ENCODE measurements at regions of chr14 and their contacts with region 1.

Region 1: GRCh38 chr14:58637391-58638230 is at the start of gene DACT1:
- DNase-seq: peak; percentile 39
- ATAC-seq: peak; percentile 49
- H3K4me3 ChIP-seq: peak within 1 kb of the TSS; percentile 63
- H3K27ac ChIP-seq: no peak within 1 kb of the TSS
- H3K4me1 ChIP-seq: peaks cover 16% of the 10 kb centered on the region
- H3K27me3 ChIP-seq: peaks cover 62% of the 10 kb centered on the region
- CTCF ChIP-seq: no peak
- total RNA-seq, gene DACT1: 0.40 and 1.8 TPM in 2 replicates

Region 2: GRCh38 chr14:58501214-58501816 is 136.3 kb before region 1 on chr14:
- CTCF ChIA-PET with region 1: interaction called, 46 read pairs
- POLR2A ChIA-PET with region 1: no interaction called
- intact Hi-C with region 1: loop called (anchors 1 kb)
- DNase-seq: peak; percentile 97
- ATAC-seq: peak; percentile 99
- H3K4me3 ChIP-seq: no peak overlapping the region
- H3K27ac ChIP-seq: no peak overlapping the region
- H3K4me1 ChIP-seq: no peaks in the 10 kb centered on the region
- H3K27me3 ChIP-seq: no peaks in the 10 kb centered on the region
- CTCF ChIP-seq: peak; percentile 100

Region 3: GRCh38 chr14:58796242-58797009 is 158.8 kb after region 1 on chr14:
- CTCF ChIA-PET with region 1: no interaction called
- POLR2A ChIA-PET with region 1: no interaction called
- intact Hi-C with region 1: loop called (anchors 1 kb)
- DNase-seq: no peak
- ATAC-seq: no peak
- H3K4me3 ChIP-seq: no peak overlapping the region
- H3K27ac ChIP-seq: no peak overlapping the region
- H3K4me1 ChIP-seq: no peaks in the 10 kb centered on the region
- H3K27me3 ChIP-seq: peaks cover 85% of the 10 kb centered on the region
- CTCF ChIP-seq: no peak

Region 4: GRCh38 chr14:58826845-58827686 is 189.5 kb after region 1 on chr14:
- CTCF ChIA-PET with region 1: interaction called, 7 read pairs
- POLR2A ChIA-PET with region 1: no interaction called
- intact Hi-C with region 1: loop called (anchors 1 kb)
- DNase-seq: peak; percentile 61
- ATAC-seq: peak; percentile 62
- H3K4me3 ChIP-seq: no peak overlapping the region
- H3K27ac ChIP-seq: no peak overlapping the region
- H3K4me1 ChIP-seq: peaks cover 18% of the 10 kb centered on the region
- H3K27me3 ChIP-seq: peaks cover 42% of the 10 kb centered on the region
- CTCF ChIP-seq: peak; percentile 85

Region 5: DNA sequence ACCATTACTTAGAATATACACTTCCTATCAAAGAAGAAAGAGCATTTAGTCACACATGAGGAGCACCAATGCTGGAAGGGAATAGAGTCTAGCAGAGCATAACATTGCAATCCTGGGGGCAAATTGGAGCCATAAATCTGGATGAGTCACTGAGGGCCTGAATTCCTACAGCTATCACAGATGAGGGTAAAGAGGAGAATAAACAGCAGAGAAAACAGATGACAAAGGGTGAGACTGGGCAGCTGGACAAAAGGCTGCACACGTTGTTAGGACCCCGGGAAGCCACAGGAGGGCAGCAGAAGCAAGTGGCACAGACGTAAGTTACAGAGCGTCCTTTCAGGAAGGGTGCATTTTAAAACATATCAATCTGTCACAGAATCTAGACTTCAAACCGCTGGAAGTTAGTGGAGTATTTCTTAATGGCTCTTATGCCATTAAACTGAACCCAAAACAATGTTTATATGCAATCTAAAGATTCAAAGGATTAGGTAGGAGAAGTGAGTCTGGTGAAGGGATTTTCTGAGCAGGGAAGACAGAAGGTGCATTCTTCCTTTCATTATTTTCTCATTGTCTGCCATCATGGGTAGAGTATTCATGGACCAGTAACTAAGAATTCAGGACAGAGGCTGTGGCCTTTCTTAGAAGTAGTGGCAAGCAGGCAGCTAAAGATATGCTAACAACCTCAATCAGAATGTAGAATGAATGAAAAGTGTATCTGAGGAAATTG is 391.0 kb after region 1 on chr14:
- CTCF ChIA-PET with region 1: interaction called, 4 read pairs
- POLR2A ChIA-PET with region 1: no interaction called
- intact Hi-C with region 1: loop called (anchors 1 kb)
- DNase-seq: peak; percentile 100
- ATAC-seq: peak; percentile 98
- H3K4me3 ChIP-seq: peak overlapping the region; percentile 8; the same call in 1 of the 2 replicates
- H3K27ac ChIP-seq: no peak overlapping the region
- H3K4me1 ChIP-seq: peaks cover 16% of the 10 kb centered on the region
- H3K27me3 ChIP-seq: peaks cover 27% of the 10 kb centered on the region
- CTCF ChIP-seq: peak; percentile 100

Region 6: GRCh38 chr14:59301354-59301753 is 663.7 kb after region 1 on chr14:
- CTCF ChIA-PET with region 1: no interaction called
- POLR2A ChIA-PET with region 1: no interaction called
- intact Hi-C with region 1: no loop called
- DNase-seq: no peak
- ATAC-seq: no peak
- H3K4me3 ChIP-seq: no peak overlapping the region
- H3K27ac ChIP-seq: no peak overlapping the region
- H3K4me1 ChIP-seq: peaks cover 25% of the 10 kb centered on the region
- H3K27me3 ChIP-seq: no peaks in the 10 kb centered on the region
- CTCF ChIP-seq: no peak

Region 7: GRCh38 chr14:59439256-59439965 is 801.8 kb after region 1 on chr14:
- CTCF ChIA-PET with region 1: no interaction called
- POLR2A ChIA-PET with region 1: no interaction called
- intact Hi-C with region 1: loop called (anchors 2 kb)
- DNase-seq: no peak
- ATAC-seq: no peak
- H3K4me3 ChIP-seq: no peak overlapping the region
- H3K27ac ChIP-seq: no peak overlapping the region
- H3K4me1 ChIP-seq: peaks cover 13% of the 10 kb centered on the region
- H3K27me3 ChIP-seq: no peaks in the 10 kb centered on the region
- CTCF ChIP-seq: no peak

Measured in PC-3 (cell line).